ENCODE measurements at regions of chr2 and their contacts with region 1.

Region 1: DNA sequence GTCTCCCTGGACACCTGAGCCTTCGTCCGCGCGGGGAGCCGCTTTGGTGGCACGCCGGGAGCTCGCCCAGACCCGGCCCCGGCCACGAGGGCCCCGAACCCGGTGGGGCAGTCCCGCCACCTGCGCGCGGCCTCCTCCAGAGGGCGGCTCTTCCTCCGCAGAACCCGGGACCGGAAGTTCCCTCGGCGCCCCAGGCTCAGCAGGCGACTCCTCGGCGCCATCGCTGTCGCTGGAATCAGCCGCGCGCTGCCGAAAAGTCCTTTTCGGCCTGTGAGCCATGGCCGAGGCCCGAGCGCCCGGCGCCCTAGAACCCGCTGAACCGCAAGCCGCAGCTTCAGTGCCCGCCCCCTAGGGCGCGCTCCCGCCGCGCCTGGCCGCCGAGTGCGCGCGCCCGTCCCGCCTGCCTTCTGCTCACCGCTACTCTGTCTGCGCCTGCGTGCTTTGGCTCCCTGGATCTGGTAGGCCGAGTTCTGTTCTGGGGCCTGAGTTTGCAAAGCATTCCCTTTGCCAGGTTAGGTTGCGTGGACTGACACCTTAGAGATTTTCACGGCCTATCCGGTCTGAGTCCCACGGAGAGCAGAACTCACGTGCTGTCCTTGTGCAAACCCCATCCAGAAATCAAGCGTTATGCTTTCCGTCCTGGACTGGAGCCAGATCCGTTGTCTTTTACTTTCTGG is at the start of gene GCFC2:
- DNase-seq: peak; percentile 77 to 89
- ATAC-seq: peak; percentile 95 to 96
- H3K4me3 ChIP-seq: peak within 1 kb of the TSS; percentile 65 to 79 (median 74)
- H3K27ac ChIP-seq: peak within 1 kb of the TSS; percentile 88 to 96 (median 94)
- H3K4me1 ChIP-seq: peaks cover 19 to 26% of the 10 kb centered on the region in 2 donors
- H3K27me3 ChIP-seq: no peaks in the 10 kb centered on the region
- CTCF ChIP-seq: peak in 4 of 5 experiments; percentile 30 to 50 (median 42)
- POLR2A ChIP-seq: peak; percentile 63 to 72
- total RNA-seq, gene GCFC2: 39.2 to 48.1 (median 43.7) TPM

Region 2: DNA sequence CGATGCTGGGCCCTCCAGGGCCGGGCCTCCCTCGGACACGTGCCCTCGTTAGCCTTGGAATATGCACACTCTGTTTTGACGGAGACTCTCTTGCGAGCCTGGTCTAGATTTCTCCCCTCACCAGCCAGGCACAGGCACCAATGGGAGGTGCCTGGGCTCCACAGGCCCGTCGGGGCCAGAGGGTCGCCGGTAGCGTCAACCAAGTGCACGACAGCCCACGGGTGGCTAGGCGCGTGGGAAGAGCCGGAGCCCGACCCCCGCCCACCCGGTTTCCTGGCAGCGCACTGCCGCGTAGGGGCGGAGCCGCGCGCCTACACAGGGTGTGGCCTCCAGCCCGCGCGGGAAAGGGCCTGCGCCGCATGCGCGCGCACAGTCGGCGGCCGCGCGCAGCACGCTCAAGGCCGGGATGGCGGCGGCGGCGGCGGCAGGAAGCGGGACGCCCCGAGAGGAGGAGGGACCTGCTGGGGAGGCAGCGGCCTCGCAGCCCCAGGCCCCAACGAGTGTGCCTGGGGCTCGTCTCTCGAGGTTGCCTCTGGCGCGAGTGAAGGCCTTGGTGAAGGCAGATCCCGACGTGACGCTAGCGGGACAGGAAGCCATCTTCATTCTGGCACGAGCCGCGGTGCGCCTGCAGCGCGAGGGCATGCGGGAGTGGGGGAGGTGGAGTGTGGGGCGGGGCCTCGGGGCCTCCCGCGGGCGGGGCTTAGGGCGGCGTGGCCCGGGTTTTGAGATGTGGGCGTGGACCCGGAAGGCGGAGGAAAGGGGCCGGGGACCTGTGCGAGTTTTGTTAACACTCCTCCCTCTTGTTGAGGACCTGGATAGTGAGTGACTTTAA is 752.2 kb before region 1 on chr2 and contains the start of gene POLE4:
- in situ Hi-C with region 1: no loop called
- intact Hi-C with region 1: loop called (anchors 10 kb)
- DNase-seq: peak; percentile 85 to 87
- ATAC-seq: peak; percentile 96 to 97
- H3K4me3 ChIP-seq: peak within 1 kb of the TSS; percentile 66 to 84 (median 78)
- H3K27ac ChIP-seq: peak within 1 kb of the TSS; percentile 78 to 95 (median 88)
- H3K4me1 ChIP-seq: peaks cover 8 to 12% of the 10 kb centered on the region in 2 donors
- H3K27me3 ChIP-seq: no peaks in the 10 kb centered on the region
- CTCF ChIP-seq: peak in 2 of 5 experiments; percentile 16 to 22
- POLR2A ChIP-seq: peak; percentile 84 to 87
- total RNA-seq, gene POLE4: 22.3 to 49.5 (median 30.9) TPM

Region 3: GRCh38 chr2:75640621-75641121 is 70.0 kb before region 1 on chr2:
- in situ Hi-C with region 1: no loop called
- intact Hi-C with region 1: loop called (anchors 2 kb)
- DNase-seq: peak; percentile 68 to 72
- ATAC-seq: peak; percentile 60 to 79
- H3K4me3 ChIP-seq: no peak overlapping the region
- H3K27ac ChIP-seq: peak overlapping the region; percentile 87 to 92 (median 88)
- H3K4me1 ChIP-seq: peaks cover 31 to 42% of the 10 kb centered on the region in 2 donors
- H3K27me3 ChIP-seq: no peaks in the 10 kb centered on the region
- CTCF ChIP-seq: peak; percentile 96 to 100 (median 99)
- POLR2A ChIP-seq: no peak

Region 4: GRCh38 chr2:75646583-75647425 is 63.9 kb before region 1 on chr2 and contains the start of gene MRPL19:
- in situ Hi-C with region 1: no loop called
- intact Hi-C with region 1: loop called (anchors 1 kb)
- DNase-seq: peak; percentile 84 to 86
- ATAC-seq: peak; percentile 76 to 84
- H3K4me3 ChIP-seq: peak within 1 kb of the TSS; percentile 80 to 98 (median 92)
- H3K27ac ChIP-seq: peak within 1 kb of the TSS; percentile 87 to 92 (median 88)
- H3K4me1 ChIP-seq: peaks cover 59 to 61% of the 10 kb centered on the region in 2 donors
- H3K27me3 ChIP-seq: no peaks in the 10 kb centered on the region
- CTCF ChIP-seq: peak in 1 of 5 experiments; percentile 15
- POLR2A ChIP-seq: peak; percentile 47 to 58
- total RNA-seq, gene MRPL19: 25.4 to 95.3 (median 69.8) TPM

Region 5: DNA sequence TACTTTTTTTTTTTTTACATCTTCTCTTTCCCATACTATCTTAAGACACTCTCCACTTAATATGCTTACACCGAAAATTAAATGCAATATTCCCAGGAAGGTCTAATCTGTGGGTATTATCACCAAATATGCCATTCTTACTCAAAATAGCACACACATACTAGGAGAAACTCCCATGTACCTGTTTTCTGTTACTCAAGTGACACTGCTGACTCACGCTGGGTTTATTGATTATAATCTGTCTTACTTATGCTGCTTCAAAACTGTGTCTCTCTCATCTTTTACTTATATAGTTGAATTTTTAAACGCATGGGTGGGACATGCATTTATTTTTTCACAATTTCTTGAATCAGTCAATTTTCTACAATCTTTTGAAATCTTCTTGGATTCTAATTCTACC is 34.3 kb before region 1 on chr2:
- in situ Hi-C with region 1: no loop called
- intact Hi-C with region 1: loop called (anchors 2 kb)
- DNase-seq: no peak
- ATAC-seq: no peak
- H3K4me3 ChIP-seq: no peak overlapping the region
- H3K27ac ChIP-seq: peak overlapping the region; percentile 84 to 93 (median 88)
- H3K4me1 ChIP-seq: peaks cover 17 to 34% of the 10 kb centered on the region in 2 donors
- H3K27me3 ChIP-seq: no peaks in the 10 kb centered on the region
- CTCF ChIP-seq: no peak
- POLR2A ChIP-seq: no peak